ENCODE measurements at regions of chr19 and their contacts with region 1.

Region 1: DNA sequence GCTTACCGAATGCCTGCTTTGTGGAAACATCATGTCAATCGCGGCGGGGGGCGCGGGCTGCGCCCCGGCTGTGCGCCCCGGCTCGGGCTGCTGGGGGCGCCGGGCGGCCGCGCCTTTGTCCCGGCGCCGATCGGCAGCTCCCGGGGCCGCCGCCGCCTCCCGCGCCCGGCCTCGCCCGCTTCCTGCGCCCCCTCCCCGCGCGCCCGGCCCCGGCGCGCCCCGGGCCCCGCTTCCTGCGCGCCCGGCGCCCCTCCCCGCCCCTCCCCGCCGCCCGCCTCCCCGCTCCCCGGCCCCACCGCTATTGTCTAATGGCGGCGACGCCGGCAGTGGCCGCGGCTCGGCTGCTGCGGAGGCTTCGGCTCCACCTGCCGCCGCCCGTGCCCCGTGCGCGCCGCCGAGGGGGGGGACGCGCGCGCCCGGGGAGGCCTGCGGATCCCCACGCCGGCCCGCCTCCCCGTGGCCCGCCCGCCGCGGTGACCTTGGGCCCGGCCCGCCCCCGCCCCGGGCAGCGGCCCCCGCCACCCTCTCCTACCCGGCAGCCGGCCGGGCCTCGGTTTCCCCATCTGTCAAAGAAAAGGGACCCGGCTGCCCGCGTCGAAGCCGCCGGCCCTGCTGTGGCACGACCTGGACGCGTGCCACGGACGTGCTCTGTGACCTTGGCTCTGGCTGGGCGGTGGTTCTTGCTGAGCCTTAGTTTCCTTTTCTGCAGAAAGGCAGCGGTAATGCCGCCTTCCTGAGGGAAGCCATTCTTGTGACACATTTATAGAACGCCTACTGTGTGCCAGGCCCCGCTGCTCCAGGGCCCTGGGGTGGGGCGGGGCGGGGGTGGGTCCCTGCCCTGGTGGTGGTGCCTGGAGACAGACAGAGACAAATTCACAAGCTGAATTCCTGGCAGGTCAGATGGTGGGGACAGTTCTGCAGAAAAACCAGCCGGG is at the start of gene TLE5:
- DNase-seq: peak; percentile 60 to 91 (median 76)
- ATAC-seq: peak; percentile 55
- H3K4me3 ChIP-seq: peak within 1 kb of the TSS; percentile 95
- H3K4me3 Mint-ChIP-seq: peak within 1 kb of the TSS; percentile 99
- H3K27ac ChIP-seq: peak within 1 kb of the TSS; percentile 75 to 87
- H3K27ac Mint-ChIP-seq: peak within 1 kb of the TSS; percentile 96
- H3K4me1 ChIP-seq: peaks cover 72% of the 10 kb centered on the region
- H3K4me1 Mint-ChIP-seq: peaks cover 42% of the 10 kb centered on the region
- H3K27me3 ChIP-seq: no peaks in the 10 kb centered on the region
- H3K27me3 Mint-ChIP-seq: no peaks in the 10 kb centered on the region
- CTCF ChIP-seq: no peak
- total RNA-seq, gene TLE5: 722 to 793 TPM

Region 2: DNA sequence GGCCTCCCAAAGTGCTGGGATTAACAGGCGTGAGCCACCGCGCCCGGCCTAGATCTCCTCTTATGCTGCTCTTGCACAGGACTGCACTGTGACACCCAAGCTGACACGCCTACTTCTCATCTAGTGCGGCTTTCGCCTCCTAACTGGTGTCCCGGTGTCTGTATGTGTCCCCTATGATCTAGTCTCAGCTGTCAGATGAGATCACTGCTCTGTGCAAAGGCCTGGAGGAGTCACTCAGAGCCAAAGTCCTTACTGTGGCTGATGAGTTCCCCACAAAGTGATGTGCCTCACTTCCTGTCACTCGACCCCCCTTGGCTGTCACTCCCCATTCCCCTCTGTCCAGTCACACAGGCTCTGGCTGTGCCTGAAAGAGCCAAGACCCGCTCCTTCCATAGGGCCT is 192.8 kb before region 1 on chr19:
- CTCF ChIA-PET with region 1: no interaction called
- POLR2A ChIA-PET with region 1: no interaction called
- intact Hi-C with region 1: no loop called
- DNase-seq: no peak
- ATAC-seq: no peak
- H3K4me3 ChIP-seq: no peak overlapping the region
- H3K4me3 Mint-ChIP-seq: no peak overlapping the region
- H3K27ac ChIP-seq: no peak overlapping the region
- H3K27ac Mint-ChIP-seq: no peak overlapping the region
- H3K4me1 ChIP-seq: peaks cover 2% of the 10 kb centered on the region
- H3K4me1 Mint-ChIP-seq: peaks cover 7% of the 10 kb centered on the region
- H3K27me3 ChIP-seq: peaks cover 0 to 3% of the 10 kb centered on the region in 2 experiments
- H3K27me3 Mint-ChIP-seq: peaks cover 10% of the 10 kb centered on the region
- CTCF ChIP-seq: no peak

Region 3: DNA sequence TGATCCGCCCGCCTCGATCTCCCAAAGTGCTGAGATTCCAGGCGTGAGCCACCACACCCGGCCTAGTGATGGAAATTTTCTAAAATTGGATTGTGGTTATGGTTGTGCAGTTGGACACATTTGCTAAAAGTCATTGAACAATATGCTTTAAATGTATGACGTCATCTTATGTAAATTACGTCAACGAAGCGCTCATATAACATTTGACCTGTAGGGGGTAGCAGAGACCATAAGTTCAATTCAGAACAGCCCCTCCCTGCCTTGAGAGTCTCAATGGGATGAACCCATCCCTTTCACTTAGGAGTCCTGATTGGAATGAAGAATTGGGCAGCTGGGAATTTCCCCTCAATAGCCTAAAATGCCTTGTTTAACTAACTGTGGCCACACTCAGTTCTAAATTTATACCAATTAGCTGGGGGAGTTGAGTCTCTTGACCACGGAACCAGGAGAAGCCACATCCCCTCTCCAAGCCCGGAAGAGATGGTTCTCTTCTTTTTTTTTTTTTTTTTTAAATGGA is 100.3 kb before region 1 on chr19:
- CTCF ChIA-PET with region 1: no interaction called
- POLR2A ChIA-PET with region 1: no interaction called
- intact Hi-C with region 1: loop called in 1 of 2 experiments (anchors 5 kb)
- DNase-seq: peak in 12 of 14 experiments; percentile 6 to 92 (median 40)
- ATAC-seq: peak; percentile 97
- H3K4me3 ChIP-seq: no peak overlapping the region
- H3K4me3 Mint-ChIP-seq: peak overlapping the region; percentile 8
- H3K27ac ChIP-seq: no peak overlapping the region
- H3K27ac Mint-ChIP-seq: peak overlapping the region; percentile 21
- H3K4me1 ChIP-seq: peaks cover 2% of the 10 kb centered on the region
- H3K4me1 Mint-ChIP-seq: peaks cover 7% of the 10 kb centered on the region
- H3K27me3 ChIP-seq: no peaks in the 10 kb centered on the region
- H3K27me3 Mint-ChIP-seq: peaks cover 4% of the 10 kb centered on the region
- CTCF ChIP-seq: peak; percentile 76

Region 4: GRCh38 chr19:3029065-3029923 is 33.1 kb before region 1 on chr19 and contains the start of gene TLE2:
- CTCF ChIA-PET with region 1: no interaction called
- POLR2A ChIA-PET with region 1: interaction called, 225 read pairs
- intact Hi-C with region 1: loop called in 1 of 2 experiments (anchors 5 kb)
- DNase-seq: peak in 3 of 14 experiments; percentile 44 to 69 (median 68)
- ATAC-seq: peak; percentile 45
- H3K4me3 ChIP-seq: peak within 1 kb of the TSS; percentile 62
- H3K4me3 Mint-ChIP-seq: peak within 1 kb of the TSS; percentile 87
- H3K27ac ChIP-seq: no peak within 1 kb of the TSS
- H3K27ac Mint-ChIP-seq: peak within 1 kb of the TSS; percentile 47
- H3K4me1 ChIP-seq: peaks cover 35% of the 10 kb centered on the region
- H3K4me1 Mint-ChIP-seq: peaks cover 41% of the 10 kb centered on the region
- H3K27me3 ChIP-seq: no peaks in the 10 kb centered on the region
- H3K27me3 Mint-ChIP-seq: no peaks in the 10 kb centered on the region
- CTCF ChIP-seq: no peak
- total RNA-seq, gene TLE2: 23.9 to 25.0 TPM

Region 5: GRCh38 chr19:3047425-3048189 is 14.8 kb before region 1 on chr19:
- CTCF ChIA-PET with region 1: interaction called, 4 read pairs
- POLR2A ChIA-PET with region 1: interaction called, 96 read pairs
- intact Hi-C with region 1: loop called in 1 of 2 experiments (anchors 2 kb)
- DNase-seq: peak; percentile 58 to 90 (median 79)
- ATAC-seq: peak; percentile 98
- H3K4me3 ChIP-seq: peak overlapping the region; percentile 60
- H3K4me3 Mint-ChIP-seq: peak overlapping the region; percentile 96
- H3K27ac ChIP-seq: peak overlapping the region in 1 of 2 donors; percentile 9
- H3K27ac Mint-ChIP-seq: peak overlapping the region; percentile 96
- H3K4me1 ChIP-seq: peaks cover 34% of the 10 kb centered on the region
- H3K4me1 Mint-ChIP-seq: peaks cover 38% of the 10 kb centered on the region
- H3K27me3 ChIP-seq: no peaks in the 10 kb centered on the region
- H3K27me3 Mint-ChIP-seq: no peaks in the 10 kb centered on the region
- CTCF ChIP-seq: no peak

Region 6: DNA sequence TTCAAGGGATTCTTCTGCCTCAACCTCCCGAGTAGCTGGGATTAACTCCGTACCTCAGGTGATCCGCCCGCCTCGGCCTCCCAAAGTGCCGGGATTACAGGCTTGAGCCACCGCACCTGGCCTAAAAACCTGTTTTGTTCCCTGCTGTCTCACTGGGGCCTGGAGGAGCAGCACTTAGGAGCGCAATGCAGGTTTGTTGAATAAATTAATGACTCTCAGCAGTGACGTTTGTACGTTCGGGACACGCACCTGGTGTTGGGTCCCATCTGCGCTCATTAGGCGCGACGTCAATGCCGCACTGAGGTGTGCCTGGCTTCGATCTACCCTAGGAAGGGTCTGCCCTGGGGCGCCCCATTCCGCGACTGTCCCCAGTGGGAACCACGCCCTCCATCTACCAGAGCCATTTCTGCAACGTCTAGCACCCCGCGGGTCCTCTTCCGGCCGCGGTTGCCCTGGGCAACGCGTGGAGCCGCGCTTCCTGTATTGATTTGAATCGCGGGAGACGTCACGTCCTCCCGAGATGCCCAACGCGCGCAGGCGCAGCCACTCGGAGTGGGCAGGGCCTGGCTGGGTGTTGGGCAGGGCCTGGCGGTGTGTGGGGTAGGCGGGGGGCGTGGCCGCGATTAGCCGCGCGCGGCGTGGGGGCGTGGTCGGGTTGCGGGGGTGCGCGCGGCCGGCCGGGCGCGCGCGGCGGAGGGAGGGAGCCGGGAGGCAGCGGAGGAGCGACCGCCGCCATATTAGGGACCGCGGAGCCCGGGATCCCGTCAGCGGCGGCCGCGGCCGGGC is 443.4 kb after region 1 on chr19 and contains the start of gene FZR1:
- CTCF ChIA-PET with region 1: no interaction called
- POLR2A ChIA-PET with region 1: no interaction called
- intact Hi-C with region 1: loop called (anchors 10 kb)
- DNase-seq: peak; percentile 98 to 100 (median 100)
- ATAC-seq: peak; percentile 85
- H3K4me3 ChIP-seq: peak within 1 kb of the TSS; percentile 91
- H3K4me3 Mint-ChIP-seq: peak within 1 kb of the TSS; percentile 95
- H3K27ac ChIP-seq: peak within 1 kb of the TSS; percentile 85 to 96
- H3K27ac Mint-ChIP-seq: peak within 1 kb of the TSS; percentile 95
- H3K4me1 ChIP-seq: peaks cover 53% of the 10 kb centered on the region
- H3K4me1 Mint-ChIP-seq: peaks cover 48% of the 10 kb centered on the region
- H3K27me3 ChIP-seq: no peaks in the 10 kb centered on the region
- H3K27me3 Mint-ChIP-seq: no peaks in the 10 kb centered on the region
- CTCF ChIP-seq: no peak
- total RNA-seq, gene FZR1: 109 to 116 TPM

Measured in CD4-positive, alpha-beta T cell (primary cell).